ENCODE measurements at regions of chr3 and their contacts with region 1.

Region 1: GRCh38 chr3:114846252-114846651 is 300.8 kb downstream of the ZBTB20 start:
- DNase-seq: no peak
- ATAC-seq: no peak

Region 2: GRCh38 chr3:114861666-114862065 is 15.4 kb after region 1 on chr3:
- intact Hi-C with region 1: loop called (anchors 2 kb)
- DNase-seq: no peak
- ATAC-seq: peak; percentile 16